RWPE1 (cell line): ENCODE measurements at regions of chr10 and their contacts with region 1.

Region 1: GRCh38 chr10:84084342-84084741 is 55.0 kb upstream of the GHITM start:
- DNase-seq: no peak
- H3K27ac ChIP-seq: no peak overlapping the region
- CTCF ChIP-seq: no peak

Region 2: DNA sequence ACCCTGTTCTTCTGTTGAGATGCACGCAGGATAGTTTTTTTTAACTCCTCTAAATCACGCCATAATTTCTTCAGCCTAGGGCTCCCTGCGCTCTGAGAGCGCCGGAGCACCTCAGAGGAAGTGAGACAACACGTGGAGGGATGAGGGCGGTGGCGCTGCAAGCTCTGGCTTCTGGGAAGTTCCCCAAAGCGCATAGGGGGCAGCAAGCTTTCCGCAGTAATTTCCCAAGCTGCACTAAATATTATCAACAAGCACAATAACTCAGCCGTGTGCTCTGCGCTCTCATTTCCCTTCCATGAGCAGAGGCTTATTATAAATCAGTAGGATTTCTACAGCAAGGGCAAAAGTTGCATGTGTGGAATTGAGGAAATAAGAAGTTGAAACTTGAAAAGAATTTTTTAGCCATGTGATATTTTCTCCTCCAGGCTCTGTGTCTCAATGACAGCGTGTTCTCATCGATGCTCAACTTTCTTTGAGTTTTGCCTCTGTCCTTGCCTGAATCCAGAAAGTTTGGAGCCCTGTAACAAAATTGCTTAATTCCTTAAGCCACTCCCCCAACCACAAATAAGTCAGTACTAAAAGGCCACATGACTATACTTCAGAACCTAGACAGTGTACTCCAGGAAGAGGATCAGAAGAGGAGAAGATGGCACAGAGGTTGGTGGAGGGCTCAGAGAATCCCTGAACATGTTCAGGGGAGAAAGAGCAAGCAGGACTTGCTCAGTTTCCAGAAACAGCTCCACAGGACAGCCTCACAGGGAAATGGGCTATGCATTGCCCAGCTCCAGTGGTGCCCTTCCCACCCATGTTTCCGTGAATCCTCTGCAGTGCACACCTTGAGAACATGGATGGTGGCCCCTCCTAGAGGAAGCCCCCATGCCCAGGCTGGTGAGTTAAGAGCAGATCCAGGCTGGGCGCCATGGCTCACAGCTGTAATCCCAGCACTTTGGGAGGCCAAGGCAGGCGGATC is 166.5 kb before region 1 on chr10:
- CTCF ChIA-PET with region 1: no interaction called
- POLR2A ChIA-PET with region 1: no interaction called
- DNase-seq: no peak
- H3K27ac ChIP-seq: no peak overlapping the region
- CTCF ChIP-seq: 0 out of 2 replicates have a peak, but pooled peaks have one; percentile 14

Region 3: GRCh38 chr10:84015877-84016595 is 68.3 kb before region 1 on chr10:
- CTCF ChIA-PET with region 1: no interaction called
- POLR2A ChIA-PET with region 1: interaction called, 12 read pairs
- DNase-seq: no peak
- H3K27ac ChIP-seq: no peak overlapping the region
- CTCF ChIP-seq: no peak

Region 4: DNA sequence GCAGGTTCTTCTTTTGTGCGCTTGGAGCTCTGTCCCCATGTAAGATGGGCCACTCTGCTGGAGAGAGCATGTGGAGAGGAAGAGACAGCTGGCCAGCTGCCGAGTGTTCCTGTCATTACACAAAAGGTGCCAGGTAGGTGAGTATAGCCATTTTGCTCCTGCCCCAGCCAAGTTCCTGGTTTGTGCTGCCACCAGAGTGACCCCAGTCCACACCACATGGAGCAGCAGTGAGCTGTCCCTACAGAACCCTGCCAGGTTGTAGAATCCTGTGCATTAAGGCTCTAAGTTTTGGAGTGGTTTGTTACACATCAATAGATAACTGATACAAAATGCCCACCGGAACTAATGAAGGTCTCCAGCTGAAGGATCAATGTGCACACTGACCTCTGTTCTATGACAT is 29.6 kb before region 1 on chr10:
- CTCF ChIA-PET with region 1: no interaction called
- POLR2A ChIA-PET with region 1: no interaction called
- DNase-seq: no peak
- H3K27ac ChIP-seq: no peak overlapping the region
- CTCF ChIP-seq: no peak

Region 5: GRCh38 chr10:84783901-84784300 is 699.6 kb after region 1 on chr10:
- CTCF ChIA-PET with region 1: no interaction called
- POLR2A ChIA-PET with region 1: no interaction called
- DNase-seq: no peak
- H3K27ac ChIP-seq: no peak overlapping the region
- CTCF ChIP-seq: no peak